RWPE1 (cell line): ENCODE measurements at regions of chr16 and their contacts with region 1.

Region 1: DNA sequence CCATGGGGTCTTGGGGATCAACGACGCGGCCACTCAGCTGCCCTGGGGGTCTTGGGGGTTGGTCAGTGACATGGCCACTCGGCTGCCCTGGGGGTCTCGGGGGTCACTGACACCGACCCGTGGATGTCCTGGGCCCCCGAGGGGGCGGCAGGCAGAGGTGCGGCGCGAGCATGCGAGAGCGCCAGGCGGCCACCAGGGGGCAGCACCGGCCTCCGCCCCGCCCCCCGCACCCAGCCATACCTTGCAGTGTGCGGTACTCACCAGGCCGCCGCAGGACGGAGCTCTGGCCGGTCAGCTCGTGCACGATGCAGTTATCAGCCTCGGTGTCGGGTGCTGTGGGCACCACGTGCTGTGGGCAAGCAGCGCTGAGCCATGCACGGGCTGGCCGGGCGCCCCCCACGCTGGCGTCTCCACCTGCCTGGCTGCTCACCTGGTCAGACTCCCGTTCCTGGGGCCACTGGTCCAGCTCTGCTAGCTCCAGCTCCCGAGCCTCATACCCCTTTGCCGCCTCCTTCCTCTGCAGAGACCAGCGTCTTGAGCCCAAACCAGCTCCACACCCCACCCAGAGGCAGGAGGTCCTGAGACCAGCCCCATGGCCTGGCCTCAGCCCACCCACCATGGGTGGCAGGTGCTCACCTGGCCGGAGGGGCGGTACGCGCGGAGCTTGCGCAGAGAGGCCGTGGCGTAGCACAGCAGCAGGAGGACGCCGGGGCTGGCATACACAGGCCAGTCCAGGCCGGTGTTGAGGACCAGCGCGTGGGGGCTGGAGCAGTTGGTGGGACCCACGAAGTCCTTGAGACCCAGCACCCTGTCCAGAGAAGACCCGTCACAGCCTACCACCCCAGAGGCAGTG is 31.2 kb downstream of the CTU2 start:
- DNase-seq: peak; percentile 75
- H3K27ac ChIP-seq: peak overlapping the region; percentile 57
- CTCF ChIP-seq: peak; percentile 96

Region 2: DNA sequence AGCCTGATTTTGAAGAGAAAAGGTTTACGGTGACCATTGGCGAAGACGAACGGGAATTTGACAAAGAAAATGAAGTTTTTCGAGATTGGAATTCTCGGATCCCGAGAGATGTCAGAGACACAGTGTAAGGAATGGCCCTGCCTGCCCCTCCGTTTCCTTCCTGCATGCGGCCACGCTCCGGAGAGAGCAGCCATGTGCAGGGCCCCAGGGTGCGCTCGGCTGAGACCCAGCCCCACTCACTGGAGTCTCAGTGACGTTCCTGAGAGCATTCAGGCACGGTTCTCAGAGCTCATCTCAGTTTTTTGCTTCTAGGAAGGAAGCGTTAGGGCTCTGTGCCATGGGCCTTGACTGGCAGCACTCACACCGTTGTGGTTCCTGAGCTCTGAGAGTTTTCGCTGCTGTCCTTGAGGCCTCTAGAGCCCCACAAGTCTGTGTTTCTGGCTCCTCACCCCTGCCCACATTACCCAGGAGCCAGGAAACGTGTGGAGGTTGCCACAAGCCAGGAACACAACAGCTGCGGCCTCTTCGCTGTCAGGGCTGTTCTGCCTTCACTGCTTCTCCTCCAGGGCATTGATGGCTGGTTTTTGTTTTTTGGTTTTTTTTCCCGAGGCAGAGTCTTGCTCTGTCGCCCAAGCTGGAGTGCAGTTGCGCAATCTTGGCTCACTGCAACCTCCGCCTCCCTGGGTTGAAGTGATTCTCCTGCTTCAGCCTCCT is 137.5 kb before region 1 on chr16:
- CTCF ChIA-PET with region 1: no interaction called
- POLR2A ChIA-PET with region 1: no interaction called
- DNase-seq: no peak
- H3K27ac ChIP-seq: no peak overlapping the region; the same call in 1 of the 2 replicates
- CTCF ChIP-seq: no peak

Region 3: GRCh38 chr16:88639231-88640038 is 98.1 kb before region 1 on chr16:
- CTCF ChIA-PET with region 1: no interaction called
- POLR2A ChIA-PET with region 1: no interaction called
- DNase-seq: no peak
- H3K27ac ChIP-seq: no peak overlapping the region
- CTCF ChIP-seq: no peak

Region 4: GRCh38 chr16:88747588-88748301 is 10.2 kb after region 1 on chr16:
- CTCF ChIA-PET with region 1: interaction called, 13 read pairs
- POLR2A ChIA-PET with region 1: interaction called, 3 read pairs
- DNase-seq: peak; percentile 38
- H3K27ac ChIP-seq: peak overlapping the region; percentile 46
- CTCF ChIP-seq: 0 out of 2 replicates have a peak, but pooled peaks have one; percentile 9

Region 5: GRCh38 chr16:88754912-88755744 is 17.6 kb after region 1 on chr16:
- CTCF ChIA-PET with region 1: interaction called, 24 read pairs
- POLR2A ChIA-PET with region 1: interaction called, 6 read pairs
- DNase-seq: peak; percentile 82
- H3K27ac ChIP-seq: peak overlapping the region; percentile 79
- CTCF ChIP-seq: peak; percentile 40

Region 6: DNA sequence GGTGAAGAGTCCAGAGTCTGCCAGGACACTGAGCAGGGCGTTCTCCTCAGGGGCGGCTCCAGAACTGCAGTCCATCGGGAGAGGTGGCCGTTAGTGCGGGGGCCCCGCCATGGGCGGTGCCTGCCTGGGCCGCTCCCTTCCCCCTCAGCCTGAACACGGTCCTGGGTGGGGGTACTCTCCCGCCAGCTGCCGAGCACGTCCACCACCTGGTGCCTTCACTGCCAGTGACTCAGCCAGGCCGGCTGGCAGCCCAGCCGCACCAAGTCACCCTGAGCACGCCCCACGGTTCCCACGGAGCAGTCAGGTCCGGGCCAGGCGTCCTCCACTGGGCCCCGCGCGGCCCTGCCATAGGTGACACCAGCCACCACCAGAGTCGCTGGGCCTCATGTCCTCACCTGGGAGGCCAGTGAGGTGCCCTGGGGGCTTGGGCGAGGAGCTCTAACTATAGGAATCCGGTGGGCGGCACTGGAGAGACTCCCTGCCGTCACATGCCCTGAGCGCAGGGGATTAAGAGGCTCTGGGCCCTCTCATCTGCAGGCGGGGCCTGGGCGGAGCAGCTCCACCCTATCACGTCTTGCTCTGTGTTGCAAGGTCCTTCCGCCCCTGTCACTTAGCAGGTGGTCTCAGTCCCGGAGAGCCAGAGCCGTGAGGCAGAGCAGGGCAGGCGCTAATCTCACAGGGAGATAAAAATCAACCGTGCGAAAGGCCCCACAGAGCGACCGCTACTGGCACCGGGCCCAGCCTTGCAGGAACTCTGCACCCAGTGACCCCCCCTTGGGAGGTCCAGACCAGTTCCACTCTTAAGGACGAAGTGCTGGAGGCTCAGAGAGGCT is 33.2 kb after region 1 on chr16:
- CTCF ChIA-PET with region 1: interaction called, 14 read pairs
- POLR2A ChIA-PET with region 1: interaction called, 4 read pairs
- DNase-seq: peak; percentile 83
- H3K27ac ChIP-seq: peak overlapping the region; percentile 99
- CTCF ChIP-seq: no peak

Region 7: DNA sequence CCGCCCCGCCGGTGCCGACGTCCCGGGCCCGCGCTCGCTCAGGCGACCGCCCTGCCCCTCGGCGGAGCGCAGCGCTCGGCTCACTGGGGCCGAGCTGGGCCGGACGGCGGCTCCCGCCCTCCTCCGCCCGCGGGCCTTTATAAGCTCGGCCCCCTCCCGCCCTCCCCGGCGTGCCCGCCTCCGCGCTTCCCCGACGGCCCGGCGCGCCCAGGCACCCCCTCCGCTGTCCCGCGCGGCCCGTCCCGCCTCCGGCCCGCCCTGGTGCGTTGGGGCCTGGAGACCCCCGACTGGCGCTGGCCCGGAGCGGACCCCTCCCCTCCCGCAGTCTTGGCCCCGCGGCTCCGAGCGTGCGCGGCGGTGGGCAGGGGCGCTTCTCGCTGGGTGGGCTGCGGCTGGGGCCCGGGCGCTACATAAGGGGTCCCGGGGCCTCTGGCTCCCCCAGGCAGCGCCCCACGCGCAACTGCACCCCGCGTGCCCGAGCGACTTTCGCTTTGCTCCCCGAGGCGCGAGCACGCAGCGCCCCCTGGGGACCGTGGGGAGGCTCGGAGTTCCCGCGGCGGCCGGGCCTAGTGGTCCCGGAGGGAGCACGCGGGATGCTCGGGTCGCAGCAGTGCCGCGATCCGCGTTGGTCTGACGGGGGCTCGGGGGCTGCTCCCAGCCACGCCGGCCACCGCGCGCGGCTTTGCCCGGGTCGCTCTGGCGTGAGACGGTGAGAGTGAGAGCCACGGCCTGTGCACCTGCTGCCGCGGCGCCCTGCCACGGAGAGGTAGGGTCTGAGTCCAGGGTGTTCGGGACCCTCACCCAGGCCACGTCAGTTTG is 47.8 kb after region 1 on chr16 and contains the start of gene PIEZO1:
- CTCF ChIA-PET with region 1: interaction called, 55 read pairs
- POLR2A ChIA-PET with region 1: no interaction called
- DNase-seq: peak; percentile 74
- H3K27ac ChIP-seq: peak within 1 kb of the TSS; percentile 96
- CTCF ChIP-seq: peak; percentile 88

Region 8: DNA sequence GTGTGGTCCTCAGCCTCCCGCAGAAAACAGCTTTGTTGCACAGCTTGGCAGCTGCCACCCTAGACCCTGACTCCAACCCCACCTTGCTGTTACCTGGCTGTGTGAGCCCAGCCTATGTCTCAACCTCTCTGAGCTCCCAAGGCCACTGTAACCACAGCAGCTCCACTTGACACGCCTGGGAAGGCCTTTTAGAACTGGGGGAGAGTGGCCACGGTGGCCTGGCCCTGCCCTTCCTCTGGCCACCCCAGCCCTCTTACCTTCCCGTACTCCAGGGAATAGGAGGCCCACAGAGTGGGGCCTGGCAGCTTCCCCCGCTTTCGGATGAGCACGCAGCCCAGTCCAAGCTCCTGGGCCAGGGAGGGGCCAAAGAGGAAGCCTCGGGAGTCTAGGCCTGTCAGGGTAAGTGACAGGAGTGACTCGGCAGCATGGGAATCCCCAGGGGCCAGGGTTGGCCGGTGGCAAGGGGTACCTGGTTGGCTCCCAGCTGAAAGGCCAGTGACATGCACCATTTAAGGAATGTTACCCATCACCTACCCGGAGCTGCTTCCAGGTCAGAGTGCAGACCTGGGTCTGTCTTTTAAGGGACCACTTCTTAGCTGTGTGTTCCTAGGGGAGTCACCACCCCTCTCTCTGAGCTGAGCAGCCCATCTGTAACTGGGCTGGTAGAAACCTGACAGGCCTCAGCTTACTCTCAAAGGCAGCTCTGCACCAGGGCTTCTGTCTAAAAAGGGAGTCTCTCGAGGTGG is 72.8 kb after region 1 on chr16:
- CTCF ChIA-PET with region 1: interaction called, 10 read pairs
- POLR2A ChIA-PET with region 1: no interaction called
- DNase-seq: peak; percentile 19
- H3K27ac ChIP-seq: peak overlapping the region; percentile 98
- CTCF ChIP-seq: no peak

Region 9: GRCh38 chr16:89241187-89242007 is 503.9 kb after region 1 on chr16:
- CTCF ChIA-PET with region 1: no interaction called
- POLR2A ChIA-PET with region 1: no interaction called
- DNase-seq: peak; percentile 59
- H3K27ac ChIP-seq: peak overlapping the region; percentile 93
- CTCF ChIP-seq: no peak